Activated CD4-positive, alpha-beta T cell treated with anti-CD3 and anti-CD28 coated beads for 36 hours (primary cell): ENCODE measurements at regions of chr19 and their contacts with region 1.

Region 1: DNA sequence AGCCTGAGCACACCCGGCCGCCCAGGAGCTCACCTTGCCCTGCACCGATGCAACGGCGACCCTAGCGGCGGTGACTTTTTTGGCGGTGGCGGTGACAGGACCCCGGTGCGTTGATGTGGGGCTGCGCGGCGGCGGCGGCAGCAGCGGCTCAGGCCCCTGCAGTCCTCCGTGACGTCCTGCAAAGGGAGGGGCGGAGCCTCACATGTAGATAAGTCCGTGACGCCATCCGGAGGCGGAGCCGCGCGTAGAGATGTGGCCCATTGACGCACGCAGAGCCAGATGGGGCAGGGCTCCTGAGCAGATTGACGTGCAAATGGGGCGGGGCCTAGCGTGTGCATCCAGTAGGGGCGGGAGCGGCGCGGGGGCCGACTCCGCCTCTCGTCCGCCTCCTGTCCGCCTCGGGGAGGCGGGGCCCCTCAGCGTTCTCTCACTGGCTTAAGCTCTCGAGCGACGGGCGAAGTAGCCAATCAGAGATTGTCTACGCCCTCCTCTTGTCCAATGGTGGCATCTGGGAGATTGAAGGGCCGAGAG is at the start of gene RAB3A:
- DNase-seq: peak; percentile 100
- ATAC-seq: peak; percentile 94
- H3K4me3 Mint-ChIP-seq: peak within 1 kb of the TSS; percentile 96
- H3K27ac Mint-ChIP-seq: peak within 1 kb of the TSS; percentile 90
- H3K4me1 Mint-ChIP-seq: peaks cover 18% of the 10 kb centered on the region
- H3K27me3 Mint-ChIP-seq: no peaks in the 10 kb centered on the region
- total RNA-seq, gene RAB3A: 5.6 to 8.9 TPM

Region 2: DNA sequence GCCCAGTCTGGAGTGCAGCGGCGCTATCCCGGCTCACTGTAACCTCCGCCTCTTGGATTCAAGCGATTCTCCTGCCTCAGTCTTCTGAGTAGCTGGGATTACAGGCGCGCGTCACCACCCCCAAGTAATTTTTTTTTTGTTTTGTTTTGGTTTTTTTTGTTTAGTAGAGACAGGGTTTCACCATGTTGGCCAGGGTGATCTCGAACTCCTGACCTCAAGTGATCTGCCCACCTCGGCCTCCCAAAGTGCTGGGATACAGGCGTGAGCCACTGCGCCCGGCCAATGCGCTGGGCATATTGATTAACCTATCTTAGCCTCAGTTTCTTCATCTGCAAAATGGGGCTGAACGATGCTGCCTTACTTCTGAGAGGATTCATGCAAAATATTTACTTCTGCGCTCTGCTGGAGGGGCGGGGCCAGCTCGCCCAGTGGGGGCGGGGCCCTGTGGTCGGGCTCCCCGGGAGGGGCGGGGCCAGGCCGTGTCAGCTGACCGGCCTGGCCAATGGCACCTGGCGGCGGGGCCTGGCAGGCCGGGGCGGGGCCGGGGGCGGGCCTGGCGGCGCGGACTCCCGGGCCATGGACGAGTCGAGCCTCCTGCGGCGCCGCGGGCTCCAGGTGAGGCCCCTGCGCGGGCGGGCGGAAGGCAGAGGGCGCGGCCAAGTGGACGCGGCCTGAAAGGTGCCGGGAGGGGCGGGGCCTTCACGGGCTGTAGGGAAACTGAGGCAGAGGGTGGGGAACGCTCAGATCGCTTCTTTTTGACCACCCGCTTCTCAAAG is 106.5 kb before region 1 on chr19 and contains the start of gene MAST3:
- CTCF ChIA-PET with region 1: no interaction called
- POLR2A ChIA-PET with region 1: no interaction called
- intact Hi-C with region 1: loop called in 1 of 2 experiments (anchors 1 kb)
- DNase-seq: peak; percentile 96
- ATAC-seq: peak; percentile 96
- H3K4me3 Mint-ChIP-seq: peak within 1 kb of the TSS; percentile 81
- H3K27ac Mint-ChIP-seq: peak within 1 kb of the TSS; percentile 39
- H3K4me1 Mint-ChIP-seq: peaks cover 31% of the 10 kb centered on the region
- H3K27me3 Mint-ChIP-seq: no peaks in the 10 kb centered on the region
- total RNA-seq, gene MAST3: 17.4 to 20.1 TPM

Region 3: DNA sequence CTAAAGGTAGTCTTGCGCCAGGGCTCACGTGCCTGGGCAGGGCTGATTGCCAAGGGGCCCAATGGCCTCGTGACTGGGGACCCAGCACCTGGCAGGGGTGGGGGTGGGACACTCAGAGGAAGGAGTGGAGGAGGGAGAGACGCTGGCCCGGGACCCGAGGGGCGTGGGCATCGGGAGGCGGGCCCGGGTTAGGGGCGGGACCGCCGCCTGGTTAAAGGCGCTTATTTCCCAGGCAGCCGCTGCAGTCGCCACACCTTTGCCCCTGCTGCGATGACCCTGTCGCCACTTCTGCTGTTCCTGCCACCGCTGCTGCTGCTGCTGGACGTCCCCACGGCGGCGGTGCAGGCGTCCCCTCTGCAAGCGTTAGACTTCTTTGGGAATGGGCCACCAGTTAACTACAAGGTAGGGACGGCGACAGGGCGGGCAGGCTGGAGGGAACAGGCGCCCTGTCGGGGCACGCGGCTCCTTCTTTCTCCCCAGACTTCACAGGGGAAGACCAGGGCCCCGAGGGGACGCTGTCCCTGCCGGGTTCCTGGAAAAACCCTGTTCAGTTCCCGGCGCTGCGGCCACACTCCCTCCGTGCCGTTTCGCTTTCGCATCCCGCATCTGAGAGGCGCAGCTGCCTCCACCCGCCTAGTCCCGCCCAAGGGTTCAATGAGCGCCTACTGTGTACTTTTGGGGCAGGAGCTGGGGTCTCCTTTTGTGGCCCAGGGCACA is 30.2 kb before region 1 on chr19 and contains the start of gene IFI30:
- CTCF ChIA-PET with region 1: no interaction called
- POLR2A ChIA-PET with region 1: no interaction called
- intact Hi-C with region 1: loop called in 1 of 2 experiments (anchors 1 kb)
- DNase-seq: peak; percentile 80
- ATAC-seq: peak; percentile 86
- H3K4me3 Mint-ChIP-seq: peak within 1 kb of the TSS; percentile 80
- H3K27ac Mint-ChIP-seq: peak within 1 kb of the TSS; percentile 65
- H3K4me1 Mint-ChIP-seq: peaks cover 15% of the 10 kb centered on the region
- H3K27me3 Mint-ChIP-seq: no peaks in the 10 kb centered on the region
- total RNA-seq, gene IFI30: 20.4 to 29.5 TPM

Region 4: DNA sequence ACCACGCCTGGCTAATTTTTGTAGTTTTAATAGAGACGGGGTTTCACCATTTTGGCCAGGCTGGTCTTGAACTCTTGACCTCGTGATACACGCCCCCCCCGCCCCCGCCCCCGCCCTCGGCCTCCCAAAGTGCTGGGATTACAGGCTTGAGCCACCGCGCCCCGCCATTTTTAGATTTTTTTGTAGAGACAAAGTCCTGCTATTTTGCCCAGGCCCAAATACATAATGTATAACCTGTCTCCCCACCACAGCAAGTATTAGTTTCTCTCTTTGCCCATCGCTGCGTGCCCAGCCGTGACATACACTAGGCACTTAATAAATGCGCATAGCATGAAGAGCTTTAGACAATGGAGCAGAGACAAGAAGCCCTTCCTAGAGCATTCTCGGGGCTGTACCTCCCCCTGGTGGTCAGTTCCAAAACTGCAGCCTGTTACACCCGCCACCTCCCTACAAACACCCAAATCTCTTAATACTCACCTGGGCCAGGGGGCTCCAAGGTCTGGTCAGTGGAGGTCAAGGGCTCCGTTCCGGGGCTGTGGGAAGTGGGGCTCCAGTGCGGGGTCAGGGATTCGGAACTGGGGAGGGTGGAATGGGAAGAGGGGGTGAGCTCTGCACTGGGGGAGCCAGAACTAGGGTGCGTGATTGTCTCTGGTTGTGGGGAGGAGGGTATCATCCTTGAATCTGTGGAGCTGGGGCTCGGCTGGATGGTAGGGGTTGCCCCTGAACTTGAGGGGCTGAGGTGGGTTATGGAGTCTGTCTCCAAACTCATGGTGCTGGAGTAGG is 47.9 kb after region 1 on chr19:
- CTCF ChIA-PET with region 1: interaction called, 13 read pairs
- POLR2A ChIA-PET with region 1: no interaction called
- intact Hi-C with region 1: loop called (anchors 1 kb)
- DNase-seq: peak; percentile 89
- ATAC-seq: peak; percentile 95
- H3K4me3 Mint-ChIP-seq: no peak overlapping the region
- H3K27ac Mint-ChIP-seq: no peak overlapping the region
- H3K4me1 Mint-ChIP-seq: no peaks in the 10 kb centered on the region
- H3K27me3 Mint-ChIP-seq: peaks cover 21% of the 10 kb centered on the region

Region 5: DNA sequence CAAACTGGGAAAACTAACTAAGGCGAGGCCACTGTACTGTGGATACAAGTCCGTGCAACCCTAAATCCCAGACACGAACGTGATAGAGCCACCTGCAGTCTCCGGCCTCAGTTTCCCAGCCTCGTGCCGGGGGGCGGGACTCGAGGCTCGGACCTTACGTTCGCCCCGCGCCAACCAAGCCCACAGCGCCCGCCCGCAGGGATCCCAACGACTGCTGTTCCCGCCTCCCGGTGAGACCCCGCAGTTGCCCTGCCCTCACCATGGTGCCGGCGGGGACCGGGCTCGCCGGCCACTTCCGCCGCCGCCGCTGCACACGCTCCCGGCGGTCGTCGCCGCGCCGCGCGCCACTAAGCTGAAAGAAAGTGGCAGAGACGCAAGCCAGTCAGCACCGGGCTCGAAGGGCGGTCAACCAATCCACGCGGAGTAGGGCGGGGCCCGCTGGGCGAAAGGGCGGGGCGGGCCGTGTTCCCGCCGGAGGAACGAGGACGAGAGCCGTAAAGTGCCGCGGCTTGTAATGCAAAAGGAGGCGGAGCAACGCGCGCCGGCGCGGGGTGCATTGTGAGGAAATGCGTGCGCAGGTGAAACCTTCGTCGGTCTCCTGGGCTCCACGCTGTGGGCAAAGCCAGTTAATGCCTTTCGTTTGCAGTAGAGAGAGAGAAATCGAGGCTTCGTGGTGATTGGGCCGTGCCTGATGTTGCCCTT is 119.0 kb after region 1 on chr19 and contains the start of gene LSM4:
- CTCF ChIA-PET with region 1: interaction called, 12 read pairs
- POLR2A ChIA-PET with region 1: interaction called, 3 read pairs
- intact Hi-C with region 1: loop called in 1 of 2 experiments (anchors 1 kb)
- DNase-seq: peak; percentile 100
- ATAC-seq: peak; percentile 94
- H3K4me3 Mint-ChIP-seq: peak within 1 kb of the TSS; percentile 90
- H3K27ac Mint-ChIP-seq: peak within 1 kb of the TSS; percentile 98
- H3K4me1 Mint-ChIP-seq: peaks cover 54% of the 10 kb centered on the region
- H3K27me3 Mint-ChIP-seq: no peaks in the 10 kb centered on the region
- total RNA-seq, gene LSM4: 269 to 370 TPM

Region 6: GRCh38 chr19:18408053-18408476 is 204.1 kb after region 1 on chr19:
- CTCF ChIA-PET with region 1: no interaction called
- POLR2A ChIA-PET with region 1: no interaction called
- intact Hi-C with region 1: loop called (anchors 1 to 2 kb)
- DNase-seq: peak; percentile 69
- ATAC-seq: peak; percentile 20
- H3K4me3 Mint-ChIP-seq: no peak overlapping the region
- H3K27ac Mint-ChIP-seq: no peak overlapping the region
- H3K4me1 Mint-ChIP-seq: no peaks in the 10 kb centered on the region
- H3K27me3 Mint-ChIP-seq: peaks cover 7% of the 10 kb centered on the region